Activated CD4-positive, alpha-beta memory T cell treated with anti-CD3 and anti-CD28 coated beads for 36 hours (primary cell): ENCODE measurements at regions of chr9 and their contacts with region 1.

Region 1: DNA sequence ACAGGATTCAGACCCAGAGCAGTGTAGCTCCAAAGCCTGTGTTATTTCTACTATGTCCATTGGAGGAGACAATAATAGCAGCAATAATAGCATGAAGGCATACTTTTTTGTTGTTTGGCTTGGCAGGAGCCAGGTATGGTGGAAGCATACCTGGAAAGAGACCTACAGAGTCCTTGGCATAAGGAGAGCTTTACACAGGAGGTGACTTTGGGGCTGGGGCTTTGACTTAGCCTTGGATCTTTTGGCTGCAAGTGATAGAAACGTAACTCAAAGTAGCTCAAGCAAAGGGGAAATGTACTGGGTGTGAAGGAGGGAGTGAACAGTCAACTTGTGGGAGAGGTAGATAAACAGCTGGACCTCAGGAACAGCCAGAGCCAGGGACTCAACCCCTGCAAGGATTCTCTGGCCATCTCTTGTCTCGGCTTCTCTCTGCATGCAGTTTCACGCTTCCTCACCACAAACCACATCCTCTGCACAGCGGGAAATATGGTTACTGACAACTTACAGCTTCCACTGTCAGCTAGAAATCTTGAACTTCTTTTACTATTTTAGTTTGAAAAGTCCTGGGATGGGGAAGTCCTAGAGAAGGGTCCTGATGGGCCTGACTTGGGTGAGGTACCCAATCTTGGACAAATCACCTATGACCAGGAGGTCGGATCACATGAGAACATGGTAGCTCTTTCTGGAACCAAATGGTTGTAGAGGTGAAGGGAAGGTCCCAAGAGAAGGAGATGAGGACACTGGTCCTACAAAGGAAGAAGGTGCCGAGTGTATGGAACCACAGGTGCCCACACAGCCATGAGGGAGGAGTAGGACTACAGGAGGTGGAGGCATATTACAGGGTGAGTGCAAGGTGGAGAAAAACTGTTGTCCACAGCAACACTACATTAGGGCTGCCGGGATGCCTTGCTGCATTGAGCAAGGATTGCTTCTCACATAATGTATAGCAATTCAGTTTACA is 47.0 kb upstream of the TGFBR1 start:
- DNase-seq: peak; percentile 90
- H3K4me3 Mint-ChIP-seq: peak overlapping the region; percentile 54
- H3K27ac Mint-ChIP-seq: peak overlapping the region; percentile 80
- H3K4me1 Mint-ChIP-seq: peaks cover 64% of the 10 kb centered on the region
- H3K27me3 Mint-ChIP-seq: no peaks in the 10 kb centered on the region

Region 2: DNA sequence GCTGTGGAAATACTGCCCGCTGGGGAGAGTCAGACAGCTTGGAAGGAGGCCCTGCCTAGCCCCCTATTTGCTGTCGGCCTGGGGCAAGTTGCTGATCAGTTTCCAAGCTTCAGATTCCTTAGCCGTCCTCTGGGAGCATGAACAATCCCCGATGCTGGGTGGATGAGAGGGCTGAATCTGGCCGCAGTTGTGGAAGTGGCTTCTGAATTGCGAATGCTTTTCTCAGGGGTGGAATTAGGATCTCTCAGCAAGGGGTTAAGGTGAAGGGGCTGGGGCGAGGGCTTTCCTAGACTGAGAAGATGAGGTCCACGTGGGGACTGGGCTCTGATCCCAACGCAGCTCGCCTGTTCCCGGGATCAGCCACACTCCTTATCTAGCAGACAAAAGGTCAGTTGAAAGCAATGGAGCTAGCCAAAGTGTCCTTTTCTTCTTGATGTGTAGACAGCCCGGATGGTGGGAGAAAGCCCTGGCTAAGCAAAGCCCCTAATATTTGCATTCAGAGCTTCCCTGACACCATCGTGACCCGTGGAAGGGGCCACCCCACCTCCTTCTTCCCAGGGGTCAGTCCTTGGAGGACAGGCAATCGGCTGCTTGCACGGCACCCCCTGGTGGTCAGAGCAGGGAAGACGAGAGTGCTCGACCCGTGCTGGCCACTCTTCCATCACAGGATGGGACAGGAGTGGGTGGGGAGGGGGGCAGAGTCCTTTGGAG is 59.3 kb before region 1 on chr9:
- CTCF ChIA-PET with region 1: interaction called, 8 read pairs
- POLR2A ChIA-PET with region 1: interaction called, 3 read pairs
- intact Hi-C with region 1: loop called (anchors 1 kb)
- DNase-seq: peak; percentile 73
- H3K4me3 Mint-ChIP-seq: no peak overlapping the region
- H3K27ac Mint-ChIP-seq: no peak overlapping the region
- H3K4me1 Mint-ChIP-seq: peaks cover 23% of the 10 kb centered on the region
- H3K27me3 Mint-ChIP-seq: peaks cover 7% of the 10 kb centered on the region

Region 3: GRCh38 chr9:99076483-99077171 is 18.7 kb after region 1 on chr9:
- CTCF ChIA-PET with region 1: no interaction called
- POLR2A ChIA-PET with region 1: no interaction called
- intact Hi-C with region 1: loop called (anchors 2 kb)
- DNase-seq: peak; percentile 44
- H3K4me3 Mint-ChIP-seq: no peak overlapping the region
- H3K27ac Mint-ChIP-seq: peak overlapping the region; percentile 38
- H3K4me1 Mint-ChIP-seq: peaks cover 21% of the 10 kb centered on the region
- H3K27me3 Mint-ChIP-seq: no peaks in the 10 kb centered on the region

Region 4: DNA sequence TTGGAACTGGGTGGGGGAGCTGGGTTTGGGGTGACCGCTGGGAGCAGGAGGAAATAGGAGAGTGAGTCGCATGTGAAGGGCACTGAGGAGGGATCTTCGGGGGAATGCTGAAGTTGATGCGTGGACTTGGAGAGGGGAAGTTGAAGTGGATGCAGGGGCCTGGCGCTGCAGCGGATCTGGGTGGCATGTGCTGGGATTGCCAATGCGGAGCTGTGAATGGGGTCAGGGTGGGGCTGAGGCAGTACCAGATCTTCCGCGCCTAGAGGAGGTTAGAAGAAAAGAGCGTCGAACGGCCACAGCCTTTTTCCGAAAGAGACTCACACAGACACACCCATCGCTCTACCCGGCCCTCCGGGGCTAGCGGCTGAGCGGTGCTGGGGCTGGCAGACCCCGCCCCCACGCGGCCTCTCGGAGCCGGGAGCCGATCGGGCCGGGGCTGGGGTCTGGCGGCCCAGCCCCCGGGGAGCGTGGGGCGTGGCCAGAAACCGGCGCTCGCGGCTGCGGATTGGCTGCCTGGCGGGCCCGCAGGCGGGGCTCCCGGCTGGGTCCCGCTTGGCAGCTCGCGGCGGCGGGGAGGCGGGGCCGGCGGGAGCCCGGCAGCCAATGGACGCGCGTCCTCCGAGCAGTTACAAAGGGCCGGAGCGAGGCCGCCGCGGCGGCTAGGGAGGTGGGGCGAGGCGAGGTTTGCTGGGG is 46.7 kb after region 1 on chr9 and contains the start of gene TGFBR1:
- CTCF ChIA-PET with region 1: interaction called, 4 read pairs
- POLR2A ChIA-PET with region 1: interaction called, 5 read pairs
- intact Hi-C with region 1: loop called (anchors 1 kb)
- DNase-seq: peak; percentile 94
- H3K4me3 Mint-ChIP-seq: peak within 1 kb of the TSS; percentile 80
- H3K27ac Mint-ChIP-seq: peak within 1 kb of the TSS; percentile 67
- H3K4me1 Mint-ChIP-seq: peaks cover 41% of the 10 kb centered on the region
- H3K27me3 Mint-ChIP-seq: no peaks in the 10 kb centered on the region
- total RNA-seq, gene TGFBR1: 25.4 to 26.3 TPM

Region 5: GRCh38 chr9:99140685-99141314 is 82.9 kb after region 1 on chr9:
- CTCF ChIA-PET with region 1: interaction called, 15 read pairs
- POLR2A ChIA-PET with region 1: no interaction called
- intact Hi-C with region 1: no loop called
- DNase-seq: peak; percentile 51
- H3K4me3 Mint-ChIP-seq: no peak overlapping the region
- H3K27ac Mint-ChIP-seq: no peak overlapping the region
- H3K4me1 Mint-ChIP-seq: peaks cover 25% of the 10 kb centered on the region
- H3K27me3 Mint-ChIP-seq: no peaks in the 10 kb centered on the region